Activated naive CD4-positive, alpha-beta T cell treated with anti-CD3 and anti-CD28 coated beads for 36 hours (primary cell): ENCODE measurements at regions of chr19 and their contacts with region 1.

Region 1: GRCh38 chr19:1672038-1672768 is 19.8 kb upstream of the TCF3 start:
- DNase-seq: peak; percentile 59
- H3K4me3 Mint-ChIP-seq: peak overlapping the region; percentile 21
- H3K27ac Mint-ChIP-seq: no peak overlapping the region
- H3K4me1 Mint-ChIP-seq: peaks cover 16% of the 10 kb centered on the region
- H3K27me3 Mint-ChIP-seq: peaks cover 52% of the 10 kb centered on the region

Region 2: GRCh38 chr19:1592755-1593500 is 79.3 kb before region 1 on chr19 and contains the start of gene MBD3:
- CTCF ChIA-PET with region 1: interaction called, 16 read pairs
- intact Hi-C with region 1: loop called (anchors 1 kb)
- DNase-seq: peak; percentile 84
- H3K4me3 Mint-ChIP-seq: peak within 1 kb of the TSS; percentile 96
- H3K27ac Mint-ChIP-seq: peak within 1 kb of the TSS; percentile 82
- H3K4me1 Mint-ChIP-seq: peaks cover 20% of the 10 kb centered on the region
- H3K27me3 Mint-ChIP-seq: no peaks in the 10 kb centered on the region
- total RNA-seq, gene MBD3: 58.1 to 63.7 TPM

Region 3: DNA sequence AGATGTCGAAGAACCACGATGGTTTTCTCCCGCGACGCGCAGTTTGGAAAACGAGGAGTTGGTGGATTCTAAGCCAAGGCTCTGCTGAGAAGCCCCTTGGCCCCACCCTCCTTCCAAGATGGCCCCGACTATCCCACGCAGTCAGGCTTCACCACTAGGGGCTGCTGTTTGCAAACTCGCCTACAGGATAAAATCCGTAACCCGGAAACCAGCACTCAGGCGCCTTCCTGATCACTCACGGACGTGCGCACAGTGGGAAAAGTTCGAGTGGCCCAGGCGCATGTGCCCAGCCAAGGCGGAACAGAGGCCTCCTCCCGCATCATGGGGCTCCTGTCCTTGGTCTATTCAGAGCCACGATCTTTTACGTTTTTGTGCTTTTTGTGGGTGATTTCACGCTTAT is 47.7 kb before region 1 on chr19:
- CTCF ChIA-PET with region 1: interaction called, 3 read pairs
- intact Hi-C with region 1: loop called (anchors 5 kb)
- DNase-seq: peak; percentile 72
- H3K4me3 Mint-ChIP-seq: no peak overlapping the region
- H3K27ac Mint-ChIP-seq: no peak overlapping the region
- H3K4me1 Mint-ChIP-seq: no peaks in the 10 kb centered on the region
- H3K27me3 Mint-ChIP-seq: no peaks in the 10 kb centered on the region

Region 4: DNA sequence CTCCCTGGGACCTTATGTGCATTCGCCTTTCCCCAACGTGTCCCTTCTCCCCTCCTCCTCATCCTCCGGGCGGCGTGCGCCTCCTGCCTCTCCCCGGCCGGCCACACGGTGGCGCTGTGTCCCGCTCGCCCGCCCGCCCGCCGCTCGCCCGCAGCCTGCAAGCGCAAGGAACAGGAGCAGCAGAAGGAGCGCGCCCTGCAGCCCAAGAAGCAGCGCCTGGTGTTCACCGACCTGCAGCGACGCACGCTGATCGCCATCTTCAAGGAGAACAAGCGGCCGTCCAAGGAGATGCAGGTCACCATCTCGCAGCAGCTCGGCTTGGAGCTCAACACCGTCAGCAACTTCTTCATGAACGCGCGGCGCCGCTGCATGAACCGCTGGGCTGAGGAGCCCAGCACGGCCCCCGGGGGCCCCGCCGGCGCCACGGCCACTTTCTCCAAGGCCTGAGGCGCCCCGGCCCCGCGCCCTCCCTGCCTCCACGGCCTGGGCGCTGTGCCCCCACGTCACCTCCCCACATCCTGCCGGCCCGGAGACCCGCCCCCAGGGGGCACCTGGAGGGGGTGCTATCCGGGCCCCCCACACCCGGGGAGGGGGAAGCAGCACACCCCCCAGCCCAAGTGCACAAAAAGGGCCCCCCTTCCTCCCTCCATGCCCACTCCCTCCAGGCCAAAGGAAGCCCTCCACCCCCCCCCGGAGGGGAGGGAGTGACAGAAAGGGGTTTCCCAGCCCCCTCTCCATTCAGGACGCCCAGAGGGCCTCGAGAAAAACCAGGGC is 103.0 kb after region 1 on chr19:
- CTCF ChIA-PET with region 1: interaction called, 12 read pairs
- intact Hi-C with region 1: no loop called
- DNase-seq: no peak
- H3K4me3 Mint-ChIP-seq: no peak overlapping the region
- H3K27ac Mint-ChIP-seq: no peak overlapping the region
- H3K4me1 Mint-ChIP-seq: no peaks in the 10 kb centered on the region
- H3K27me3 Mint-ChIP-seq: peaks cover 69% of the 10 kb centered on the region

Region 5: GRCh38 chr19:1905071-1905862 is 233.1 kb after region 1 on chr19 and contains the starts of genes ADAT3 and SCAMP4:
- CTCF ChIA-PET with region 1: no interaction called
- intact Hi-C with region 1: no loop called
- DNase-seq: peak; percentile 99
- H3K4me3 Mint-ChIP-seq: peak within 1 kb of the TSS; percentile 89
- H3K27ac Mint-ChIP-seq: peak within 1 kb of the TSS; percentile 89
- H3K4me1 Mint-ChIP-seq: peaks cover 46% of the 10 kb centered on the region
- H3K27me3 Mint-ChIP-seq: no peaks in the 10 kb centered on the region
- total RNA-seq, gene ADAT3: 3.0 to 3.4 TPM
- total RNA-seq, gene SCAMP4: 12.1 to 14.5 TPM